IMR-90 (cell line): ENCODE measurements at regions of chr15 and their contacts with region 1.

Region 1: GRCh38 chr15:66774001-66774814 is 72.2 kb downstream of the SMAD6 start:
- DNase-seq: peak; percentile 64
- ATAC-seq: peak; percentile 79
- H3K4me3 ChIP-seq: no peak overlapping the region
- H3K27ac ChIP-seq: peak overlapping the region; percentile 61
- H3K4me1 ChIP-seq: peaks cover 49% of the 10 kb centered on the region
- H3K27me3 ChIP-seq: no peaks in the 10 kb centered on the region
- CTCF ChIP-seq: peak; percentile 98
- POLR2A ChIP-seq: no peak
- RAD21 ChIP-seq: peak; percentile 90

Region 2: DNA sequence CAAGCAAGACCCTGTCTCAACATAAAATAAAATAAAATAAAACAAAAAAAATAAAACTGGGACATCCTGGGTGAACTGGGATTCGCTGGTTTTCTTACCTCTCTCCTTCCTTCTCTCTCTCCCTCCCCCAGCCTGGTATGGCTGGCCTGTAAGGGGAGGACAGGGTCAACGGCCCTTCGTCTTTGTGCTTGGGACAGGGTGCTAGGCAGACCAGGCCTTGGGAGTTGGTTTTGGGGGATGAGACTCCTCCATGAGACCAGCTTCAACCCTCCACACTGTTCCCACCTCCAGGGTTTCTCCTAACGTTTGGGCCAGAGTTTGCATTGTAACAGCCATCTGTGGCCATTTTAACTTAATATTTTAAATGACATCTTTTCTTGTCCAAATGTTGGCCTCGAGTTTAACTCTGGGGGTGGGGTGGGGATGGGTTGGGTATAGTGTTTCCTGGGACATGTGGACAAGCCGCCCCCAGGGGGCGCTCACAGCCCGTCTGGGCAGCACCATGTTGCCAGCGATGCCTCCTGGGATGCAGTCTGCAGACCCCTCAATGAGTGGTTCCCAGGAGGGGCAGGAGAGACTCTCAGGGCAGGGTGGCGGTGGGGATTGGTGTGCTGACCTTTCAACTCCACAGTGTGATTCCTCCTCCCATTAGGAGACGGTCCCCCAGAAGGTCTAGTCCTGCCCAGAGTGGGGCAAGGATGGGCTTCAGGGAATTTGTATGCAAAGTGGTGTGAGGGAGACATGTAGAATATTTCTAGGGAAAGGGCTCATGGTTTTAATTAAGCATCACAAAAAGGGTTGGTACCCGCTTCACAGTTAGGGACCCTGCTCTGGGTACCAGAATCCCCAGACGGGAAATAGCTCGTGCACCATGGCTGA is 170.7 kb before region 1 on chr15:
- CTCF ChIA-PET with region 1: no interaction called
- POLR2A ChIA-PET with region 1: no interaction called
- dilution Hi-C with region 1: no loop called
- in situ Hi-C with region 1: no loop called
- intact Hi-C with region 1: loop called (anchors 5 kb)
- DNase-seq: peak; percentile 62
- ATAC-seq: peak; percentile 99
- H3K4me3 ChIP-seq: no peak overlapping the region
- H3K27ac ChIP-seq: no peak overlapping the region
- H3K4me1 ChIP-seq: no peaks in the 10 kb centered on the region
- H3K27me3 ChIP-seq: peaks cover 19% of the 10 kb centered on the region
- CTCF ChIP-seq: peak; percentile 93
- POLR2A ChIP-seq: no peak
- RAD21 ChIP-seq: peak; percentile 94

Region 3: DNA sequence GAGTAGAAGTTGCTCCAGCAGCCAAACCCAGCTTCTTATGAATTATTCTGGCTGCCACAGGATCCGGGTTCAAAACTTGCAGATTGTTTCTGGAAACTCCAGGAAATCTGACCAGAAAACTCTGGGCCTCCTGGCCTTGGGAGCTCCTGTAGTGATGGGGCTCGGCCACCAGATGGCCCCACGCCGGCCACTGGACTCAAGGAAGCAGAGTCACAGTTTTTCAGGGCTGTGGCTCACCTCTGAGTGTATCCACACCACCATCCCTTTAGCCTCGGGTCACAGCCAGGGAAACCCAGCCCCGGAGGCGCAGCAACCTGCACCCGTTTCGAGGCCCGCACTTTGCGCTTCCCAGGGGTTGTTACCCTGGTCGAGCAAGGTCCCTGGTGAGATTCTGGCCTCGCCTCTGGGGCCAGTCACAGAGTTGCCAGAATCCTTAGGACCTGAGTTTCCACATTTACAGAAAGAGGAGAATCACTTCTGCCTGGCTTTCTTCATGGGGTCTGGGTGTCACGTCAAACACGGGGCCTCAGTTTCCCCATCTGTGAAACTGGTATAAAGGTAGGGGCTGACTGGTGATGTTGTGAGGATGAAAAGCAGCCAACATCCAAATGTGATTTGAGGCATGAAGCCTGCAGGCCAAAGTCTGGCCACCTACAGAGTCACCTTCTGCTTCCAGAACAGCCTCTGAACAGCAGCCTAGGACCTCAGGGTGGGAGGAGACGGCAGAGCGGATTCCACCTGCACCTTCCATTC is 154.9 kb before region 1 on chr15:
- CTCF ChIA-PET with region 1: interaction called, 4 read pairs
- POLR2A ChIA-PET with region 1: no interaction called
- dilution Hi-C with region 1: no loop called
- in situ Hi-C with region 1: loop called (anchors 5 kb)
- intact Hi-C with region 1: loop called (anchors 5 kb)
- DNase-seq: peak; percentile 68
- ATAC-seq: peak; percentile 92
- H3K4me3 ChIP-seq: no peak overlapping the region
- H3K27ac ChIP-seq: no peak overlapping the region
- H3K4me1 ChIP-seq: peaks cover 15% of the 10 kb centered on the region
- H3K27me3 ChIP-seq: no peaks in the 10 kb centered on the region
- CTCF ChIP-seq: peak; percentile 94
- POLR2A ChIP-seq: no peak
- RAD21 ChIP-seq: peak; percentile 85

Region 4: DNA sequence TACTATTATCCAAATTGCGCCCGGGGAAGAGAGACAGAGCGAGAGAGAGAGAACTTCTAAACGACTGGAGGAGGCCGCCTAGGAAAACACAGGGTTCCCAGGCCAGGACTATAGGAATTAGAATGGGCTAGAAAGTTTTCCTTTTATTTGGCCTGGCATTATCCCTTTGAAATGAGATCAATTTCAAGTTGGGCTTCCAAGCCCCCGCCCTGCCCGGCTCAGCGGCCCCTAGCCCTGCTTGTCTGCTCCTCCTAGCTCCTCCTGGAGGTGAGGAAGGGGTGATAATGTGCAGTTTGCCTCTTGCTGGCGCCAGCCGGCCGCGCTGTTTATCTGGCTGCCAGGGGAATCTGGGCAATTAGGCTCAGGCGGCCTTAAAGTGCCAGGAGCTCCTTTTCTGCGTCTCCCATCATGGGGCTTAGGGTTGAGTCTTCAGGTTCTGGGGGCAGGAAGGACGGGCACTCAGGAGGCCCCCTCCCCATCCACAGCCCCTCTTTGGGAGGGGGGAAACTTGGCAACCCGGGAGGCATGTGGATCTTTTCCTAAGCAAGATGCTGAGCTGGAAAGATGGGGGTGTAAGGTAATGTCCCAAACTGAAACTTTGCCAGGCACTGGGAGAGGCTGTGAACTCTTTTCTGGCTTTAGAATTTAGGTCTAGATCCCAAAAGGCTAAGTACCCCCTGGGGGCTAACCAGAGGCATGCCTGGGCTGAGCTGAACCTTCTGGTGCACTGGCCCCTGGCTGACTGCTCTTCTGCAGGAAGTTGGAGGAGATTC is 66.7 kb before region 1 on chr15:
- CTCF ChIA-PET with region 1: interaction called, 8 read pairs
- POLR2A ChIA-PET with region 1: no interaction called
- dilution Hi-C with region 1: no loop called
- in situ Hi-C with region 1: loop called (anchors 5 kb)
- intact Hi-C with region 1: loop called (anchors 2 kb)
- DNase-seq: peak; percentile 43
- ATAC-seq: peak; percentile 36
- H3K4me3 ChIP-seq: no peak overlapping the region
- H3K27ac ChIP-seq: peak overlapping the region; percentile 30
- H3K4me1 ChIP-seq: peaks cover 34% of the 10 kb centered on the region
- H3K27me3 ChIP-seq: no peaks in the 10 kb centered on the region
- CTCF ChIP-seq: peak; percentile 34
- POLR2A ChIP-seq: no peak
- RAD21 ChIP-seq: peak; percentile 15; the same call in 1 of the 2 replicates

Region 5: DNA sequence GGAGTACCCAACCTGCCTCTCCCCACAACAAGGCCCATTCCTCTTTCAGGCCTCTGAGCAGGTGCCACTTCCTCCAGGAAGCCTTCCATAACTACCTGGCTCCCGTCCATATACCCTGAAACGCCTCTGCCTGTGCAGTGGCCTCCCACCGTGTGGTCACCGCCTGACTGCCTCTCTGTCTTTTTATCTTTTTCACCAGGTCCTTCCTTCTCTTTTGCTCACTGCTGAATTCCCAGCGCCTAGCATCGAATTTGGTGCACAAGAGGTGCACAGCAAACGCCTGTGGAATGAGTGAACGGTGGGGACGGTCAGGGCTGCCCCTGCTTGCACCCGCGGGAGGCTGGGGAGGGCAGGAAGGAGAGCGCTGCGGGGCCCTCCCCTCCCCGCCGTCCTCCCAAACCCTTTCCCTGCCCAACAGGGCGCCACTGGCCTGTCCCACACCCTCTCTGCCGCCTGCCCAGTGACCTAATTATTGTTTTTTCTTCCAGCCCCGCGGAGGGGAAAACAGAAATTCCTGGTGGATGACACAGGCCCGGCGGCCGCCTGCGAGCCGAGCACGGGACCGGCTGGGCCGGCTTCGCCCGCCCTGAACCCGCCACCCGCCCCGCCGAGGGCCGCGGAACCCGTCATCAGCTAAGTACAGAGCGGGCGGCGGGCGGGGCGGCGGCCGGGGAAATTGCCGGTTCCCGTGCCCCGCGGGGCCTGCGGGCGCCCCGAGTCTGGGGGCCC is 67.9 kb after region 1 on chr15:
- CTCF ChIA-PET with region 1: interaction called, 5 read pairs
- POLR2A ChIA-PET with region 1: interaction called, 7 read pairs
- dilution Hi-C with region 1: no loop called
- in situ Hi-C with region 1: no loop called
- intact Hi-C with region 1: loop called (anchors 2 kb)
- DNase-seq: peak; percentile 89
- ATAC-seq: peak; percentile 94
- H3K4me3 ChIP-seq: peak overlapping the region; percentile 28
- H3K27ac ChIP-seq: peak overlapping the region; percentile 98
- H3K4me1 ChIP-seq: peaks cover 29% of the 10 kb centered on the region
- H3K27me3 ChIP-seq: no peaks in the 10 kb centered on the region
- CTCF ChIP-seq: 0 out of 2 replicates have a peak, but pooled peaks have one; percentile 1
- POLR2A ChIP-seq: peak; percentile 61
- RAD21 ChIP-seq: no peak; the same call in 1 of the 2 replicates